Adrenal gland (tissue), 19 donors: ENCODE measurements at regions of chr21 and their contacts with region 1.

Region 1: DNA sequence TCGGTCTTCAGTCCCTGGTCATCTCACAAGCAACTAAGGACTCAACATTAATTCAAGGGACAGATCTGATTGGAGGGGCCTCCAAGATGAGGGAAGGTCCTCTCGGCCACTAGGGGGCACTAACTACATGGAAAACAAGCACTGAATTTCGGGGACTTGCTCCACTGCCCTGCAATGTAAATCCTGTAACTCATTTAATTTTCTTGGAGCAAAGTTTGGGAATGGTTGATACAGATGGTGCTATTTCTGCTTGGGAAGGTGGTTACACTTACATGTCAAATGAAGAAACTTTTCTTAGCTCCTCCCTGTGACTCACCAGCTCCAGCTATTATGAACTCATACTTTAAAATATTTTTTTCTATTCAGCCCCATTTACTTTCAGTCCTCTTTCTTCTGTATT is 97.4 kb upstream of the KCNJ15 start:
- DNase-seq: peak; percentile 64 to 85 (median 74)
- H3K4me3 ChIP-seq: no peak overlapping the region
- H3K27ac ChIP-seq: no peak overlapping the region
- H3K4me1 ChIP-seq: no peaks in the 10 kb centered on the region
- H3K27me3 ChIP-seq: no peaks in the 10 kb centered on the region
- CTCF ChIP-seq: peak; percentile 68 to 89 (median 83)
- POLR2A ChIP-seq: no peak

Region 2: GRCh38 chr21:37994211-37994610 is 165.1 kb before region 1 on chr21:
- intact Hi-C with region 1: no loop called
- DNase-seq: no peak
- H3K4me3 ChIP-seq: no peak overlapping the region
- H3K27ac ChIP-seq: no peak overlapping the region
- H3K4me1 ChIP-seq: no peaks in the 10 kb centered on the region
- H3K27me3 ChIP-seq: peaks cover 4% of the 10 kb centered on the region
- CTCF ChIP-seq: no peak
- POLR2A ChIP-seq: no peak

Region 3: GRCh38 chr21:38219049-38219628 is 59.8 kb after region 1 on chr21:
- intact Hi-C with region 1: loop called in 1 of 2 experiments (anchors 2 kb)
- DNase-seq: peak; percentile 68 to 83 (median 77)
- H3K4me3 ChIP-seq: no peak overlapping the region
- H3K27ac ChIP-seq: no peak overlapping the region
- H3K4me1 ChIP-seq: peaks cover 0 to 8% of the 10 kb centered on the region in 2 donors
- H3K27me3 ChIP-seq: no peaks in the 10 kb centered on the region
- CTCF ChIP-seq: peak; percentile 91 to 99 (median 96)
- POLR2A ChIP-seq: no peak

Region 4: GRCh38 chr21:38355992-38356797 is 196.8 kb after region 1 on chr21:
- intact Hi-C with region 1: loop called (anchors 2 to 5 kb)
- DNase-seq: peak; percentile 72 to 88 (median 84)
- H3K4me3 ChIP-seq: no peak overlapping the region
- H3K27ac ChIP-seq: no peak overlapping the region
- H3K4me1 ChIP-seq: no peaks in the 10 kb centered on the region
- H3K27me3 ChIP-seq: no peaks in the 10 kb centered on the region
- CTCF ChIP-seq: peak; percentile 89 to 98 (median 95)
- POLR2A ChIP-seq: no peak

Region 5: GRCh38 chr21:38367646-38368045 is 208.3 kb after region 1 on chr21:
- intact Hi-C with region 1: no loop called
- DNase-seq: no peak
- H3K4me3 ChIP-seq: no peak overlapping the region
- H3K27ac ChIP-seq: no peak overlapping the region
- H3K4me1 ChIP-seq: no peaks in the 10 kb centered on the region
- H3K27me3 ChIP-seq: no peaks in the 10 kb centered on the region
- CTCF ChIP-seq: no peak
- POLR2A ChIP-seq: no peak